Heart right ventricle (tissue), 16 donors: ENCODE measurements at regions of chr9 and their contacts with region 1.

Region 1: DNA sequence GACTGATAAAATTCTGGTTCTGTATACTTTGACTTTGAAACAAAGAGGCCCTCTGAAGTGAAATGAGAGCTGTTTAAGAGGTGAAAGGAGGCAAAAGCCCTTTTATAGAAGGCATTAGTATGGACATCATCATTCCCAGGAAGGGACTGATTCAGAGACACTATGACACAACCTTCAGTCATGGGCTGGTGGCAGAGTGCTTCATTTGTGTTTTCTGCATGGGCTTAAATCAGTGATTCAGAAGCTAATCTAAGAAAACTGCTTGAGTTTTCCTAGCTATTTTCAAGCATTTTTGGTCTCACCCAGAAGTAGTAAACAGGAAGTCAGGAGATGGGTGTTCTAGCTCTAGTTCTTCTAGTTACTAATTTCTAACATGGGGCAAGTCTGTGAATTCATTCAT is 288.9 kb downstream of the TRPM3 start:
- DNase-seq: no peak
- ATAC-seq: no peak
- H3K4me3 ChIP-seq: no peak overlapping the region
- H3K27ac ChIP-seq: no peak overlapping the region
- H3K4me1 ChIP-seq: no peaks in the 10 kb centered on the region
- H3K27me3 ChIP-seq: no peaks in the 10 kb centered on the region
- CTCF ChIP-seq: no peak

Region 2: GRCh38 chr9:70789086-70789485 is 43.4 kb before region 1 on chr9:
- intact Hi-C with region 1: loop called in 1 of 10 experiments (anchors 1 kb)
- DNase-seq: no peak
- ATAC-seq: no peak
- H3K4me3 ChIP-seq: no peak overlapping the region
- H3K27ac ChIP-seq: no peak overlapping the region
- H3K4me1 ChIP-seq: no peaks in the 10 kb centered on the region
- H3K27me3 ChIP-seq: no peaks in the 10 kb centered on the region
- CTCF ChIP-seq: no peak

Region 3: DNA sequence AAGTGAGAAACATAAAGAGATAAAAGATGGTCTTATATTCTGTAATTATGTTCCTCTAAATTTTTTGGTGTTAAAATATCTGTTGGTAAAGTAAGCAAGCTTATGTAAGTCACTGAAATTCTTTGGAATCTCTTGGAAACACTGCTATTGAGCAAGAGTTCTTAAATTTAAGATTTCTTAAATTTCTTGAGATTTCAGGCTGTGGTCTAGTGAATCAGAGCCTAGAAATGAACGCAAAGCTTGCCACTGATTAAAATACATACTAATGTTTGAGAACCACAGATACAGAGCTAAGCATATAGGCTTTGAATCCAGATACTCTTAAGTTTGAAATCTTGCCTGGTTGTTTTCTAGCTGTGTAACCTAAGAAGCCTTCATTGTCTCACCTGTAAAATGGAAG is 155.5 kb after region 1 on chr9:
- intact Hi-C with region 1: no loop called
- DNase-seq: no peak
- ATAC-seq: no peak
- H3K4me3 ChIP-seq: no peak overlapping the region
- H3K27ac ChIP-seq: no peak overlapping the region
- H3K4me1 ChIP-seq: no peaks in the 10 kb centered on the region
- H3K27me3 ChIP-seq: no peaks in the 10 kb centered on the region
- CTCF ChIP-seq: no peak